AG04450 (cell line): ENCODE measurements at regions of chr12 and their contacts with region 1.

Region 1: GRCh38 chr12:122130150-122130549 is 43.9 kb downstream of the IL31 start:
- DNase-seq: no peak
- H3K4me3 ChIP-seq: no peak overlapping the region
- H3K27ac ChIP-seq: no peak overlapping the region
- H3K27me3 ChIP-seq: no peaks in the 10 kb centered on the region
- CTCF ChIP-seq: no peak

Region 2: GRCh38 chr12:122116707-122117535 is 13.2 kb before region 1 on chr12:
- CTCF ChIA-PET with region 1: no interaction called
- POLR2A ChIA-PET with region 1: no interaction called
- DNase-seq: no peak
- H3K4me3 ChIP-seq: no peak overlapping the region
- H3K27ac ChIP-seq: no peak overlapping the region
- H3K27me3 ChIP-seq: no peaks in the 10 kb centered on the region
- CTCF ChIP-seq: no peak

Region 3: DNA sequence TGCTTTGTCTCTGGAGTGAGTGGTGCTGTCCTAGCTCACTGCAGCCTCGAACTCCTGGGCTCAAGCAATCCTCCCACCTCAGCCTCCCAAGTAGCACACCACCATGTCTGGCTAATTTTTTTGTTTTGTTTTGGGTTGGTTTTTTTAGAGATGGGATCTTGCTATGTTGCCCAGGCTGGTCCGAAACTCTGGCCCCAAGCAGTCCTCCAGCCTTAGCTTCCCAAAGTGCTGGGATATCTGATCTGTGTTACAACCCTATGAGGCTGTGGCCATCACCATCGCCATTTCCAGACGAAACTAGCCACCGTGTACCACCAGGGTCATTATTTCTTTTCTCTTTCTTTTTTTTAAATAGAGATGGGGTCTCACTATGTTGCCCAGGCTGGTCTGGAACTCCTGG is 41.2 kb after region 1 on chr12:
- CTCF ChIA-PET with region 1: no interaction called
- POLR2A ChIA-PET with region 1: no interaction called
- DNase-seq: no peak
- H3K4me3 ChIP-seq: no peak overlapping the region
- H3K27ac ChIP-seq: no peak overlapping the region
- H3K27me3 ChIP-seq: peaks cover 9% of the 10 kb centered on the region
- CTCF ChIP-seq: no peak

Region 4: GRCh38 chr12:122190842-122191668 is 60.9 kb after region 1 on chr12:
- CTCF ChIA-PET with region 1: interaction called, 32 read pairs
- POLR2A ChIA-PET with region 1: no interaction called
- DNase-seq: peak; percentile 15
- H3K4me3 ChIP-seq: no peak overlapping the region
- H3K27ac ChIP-seq: no peak overlapping the region
- H3K27me3 ChIP-seq: no peaks in the 10 kb centered on the region
- CTCF ChIP-seq: peak; percentile 86